ENCODE measurements at regions of chr6 and their contacts with region 1.

Region 1: GRCh38 chr6:1596088-1596852 is 13.4 kb upstream of the FOXC1 start:
- DNase-seq: peak; percentile 45
- ATAC-seq: peak; percentile 89
- H3K4me3 ChIP-seq: peak overlapping the region; percentile 49
- H3K27ac ChIP-seq: no peak overlapping the region; the same call in 1 of the 2 replicates
- H3K4me1 ChIP-seq: peaks cover 11% of the 10 kb centered on the region
- H3K27me3 ChIP-seq: peaks cover 23% of the 10 kb centered on the region
- CTCF ChIP-seq: peak; percentile 89
- POLR2A ChIP-seq: 0 out of 2 replicates have a peak, but pooled peaks have one; percentile 38
- RAD21 ChIP-seq: peak; percentile 91

Region 2: GRCh38 chr6:2103644-2104523 is 507.6 kb after region 1 on chr6:
- CTCF ChIA-PET with region 1: interaction called, 5 read pairs
- POLR2A ChIA-PET with region 1: no interaction called
- dilution Hi-C with region 1: no loop called
- in situ Hi-C with region 1: loop called (anchors 10 kb)
- intact Hi-C with region 1: no loop called
- DNase-seq: peak; percentile 69
- ATAC-seq: peak; percentile 82
- H3K4me3 ChIP-seq: no peak overlapping the region
- H3K27ac ChIP-seq: no peak overlapping the region
- H3K4me1 ChIP-seq: peaks cover 3% of the 10 kb centered on the region
- H3K27me3 ChIP-seq: no peaks in the 10 kb centered on the region
- CTCF ChIP-seq: peak; percentile 81
- POLR2A ChIP-seq: 0 out of 2 replicates have a peak, but pooled peaks have one; percentile 29
- RAD21 ChIP-seq: peak; percentile 92

Region 3: GRCh38 chr6:2441601-2442475 is 845.6 kb after region 1 on chr6:
- CTCF ChIA-PET with region 1: no interaction called
- POLR2A ChIA-PET with region 1: interaction called, 3 read pairs
- dilution Hi-C with region 1: no loop called
- in situ Hi-C with region 1: loop called (anchors 5 kb)
- intact Hi-C with region 1: no loop called
- DNase-seq: peak; percentile 18
- ATAC-seq: peak; percentile 51; the same call in 1 of the 2 replicates
- H3K4me3 ChIP-seq: no peak overlapping the region
- H3K27ac ChIP-seq: no peak overlapping the region
- H3K4me1 ChIP-seq: peaks cover 5% of the 10 kb centered on the region; the same call in 1 of the 2 replicates
- H3K27me3 ChIP-seq: no peaks in the 10 kb centered on the region
- CTCF ChIP-seq: no peak
- POLR2A ChIP-seq: no peak
- RAD21 ChIP-seq: no peak

Region 4: GRCh38 chr6:2634139-2634964 is 1038.1 kb after region 1 on chr6:
- CTCF ChIA-PET with region 1: interaction called, 5 read pairs
- POLR2A ChIA-PET with region 1: no interaction called
- dilution Hi-C with region 1: no loop called
- in situ Hi-C with region 1: loop called (anchors 5 kb)
- intact Hi-C with region 1: loop called (anchors 1 kb)
- DNase-seq: peak; percentile 81
- ATAC-seq: peak; percentile 88
- H3K4me3 ChIP-seq: peak overlapping the region; percentile 17; the same call in 1 of the 2 replicates
- H3K27ac ChIP-seq: peak overlapping the region; percentile 24
- H3K4me1 ChIP-seq: peaks cover 19% of the 10 kb centered on the region
- H3K27me3 ChIP-seq: peaks cover under 1% of the 10 kb centered on the region
- CTCF ChIP-seq: peak; percentile 97
- POLR2A ChIP-seq: 0 out of 2 replicates have a peak, but pooled peaks have one; percentile 33
- RAD21 ChIP-seq: peak; percentile 94

Region 5: GRCh38 chr6:2695454-2696095 is 1099.3 kb after region 1 on chr6:
- CTCF ChIA-PET with region 1: interaction called, 3 read pairs
- POLR2A ChIA-PET with region 1: no interaction called
- dilution Hi-C with region 1: no loop called
- in situ Hi-C with region 1: no loop called
- intact Hi-C with region 1: loop called (anchors 1 kb)
- DNase-seq: peak; percentile 57
- ATAC-seq: peak; percentile 77
- H3K4me3 ChIP-seq: no peak overlapping the region
- H3K27ac ChIP-seq: no peak overlapping the region
- H3K4me1 ChIP-seq: no peaks in the 10 kb centered on the region
- H3K27me3 ChIP-seq: peaks cover 15% of the 10 kb centered on the region
- CTCF ChIP-seq: peak; percentile 63
- POLR2A ChIP-seq: no peak
- RAD21 ChIP-seq: peak; percentile 72